CD4-positive, alpha-beta T cell (primary cell): ENCODE measurements at regions of chr18 and their contacts with region 1.

Region 1: GRCh38 chr18:35059280-35059927 is 18.2 kb downstream of the MAPRE2 start:
- DNase-seq: no peak
- ATAC-seq: no peak
- H3K4me3 ChIP-seq: no peak overlapping the region
- H3K4me3 Mint-ChIP-seq: no peak overlapping the region
- H3K27ac ChIP-seq: no peak overlapping the region
- H3K27ac Mint-ChIP-seq: no peak overlapping the region
- H3K4me1 ChIP-seq: peaks cover 16% of the 10 kb centered on the region
- H3K4me1 Mint-ChIP-seq: peaks cover 80% of the 10 kb centered on the region
- H3K27me3 ChIP-seq: no peaks in the 10 kb centered on the region
- H3K27me3 Mint-ChIP-seq: no peaks in the 10 kb centered on the region
- CTCF ChIP-seq: no peak

Region 2: GRCh38 chr18:35019933-35020332 is 39.5 kb before region 1 on chr18:
- CTCF ChIA-PET with region 1: no interaction called
- POLR2A ChIA-PET with region 1: no interaction called
- intact Hi-C with region 1: loop called in 1 of 2 experiments (anchors 5 kb)
- DNase-seq: no peak
- ATAC-seq: no peak
- H3K4me3 ChIP-seq: no peak overlapping the region
- H3K4me3 Mint-ChIP-seq: no peak overlapping the region
- H3K27ac ChIP-seq: no peak overlapping the region
- H3K27ac Mint-ChIP-seq: no peak overlapping the region
- H3K4me1 ChIP-seq: no peaks in the 10 kb centered on the region
- H3K4me1 Mint-ChIP-seq: no peaks in the 10 kb centered on the region
- H3K27me3 ChIP-seq: no peaks in the 10 kb centered on the region
- H3K27me3 Mint-ChIP-seq: peaks cover 9% of the 10 kb centered on the region
- CTCF ChIP-seq: no peak